ENCODE measurements at regions of chr22 and their contacts with region 1.

Region 1: GRCh38 chr22:34403672-34404071 is 483.4 kb upstream of the LARGE1 start:
- DNase-seq: no peak
- H3K4me3 ChIP-seq: no peak overlapping the region
- H3K27ac ChIP-seq: no peak overlapping the region
- H3K4me1 ChIP-seq: no peaks in the 10 kb centered on the region
- H3K27me3 ChIP-seq: no peaks in the 10 kb centered on the region
- CTCF ChIP-seq: no peak

Region 2: GRCh38 chr22:35014812-35015211 is 611.1 kb after region 1 on chr22:
- CTCF ChIA-PET with region 1: no interaction called
- dilution Hi-C with region 1: no loop called
- in situ Hi-C with region 1: loop called in 1 of 2 experiments (anchors 10 kb)
- intact Hi-C with region 1: no loop called
- DNase-seq: no peak
- H3K4me3 ChIP-seq: no peak overlapping the region
- H3K27ac ChIP-seq: no peak overlapping the region
- H3K4me1 ChIP-seq: no peaks in the 10 kb centered on the region
- H3K27me3 ChIP-seq: no peaks in the 10 kb centered on the region
- CTCF ChIP-seq: no peak

Region 3: GRCh38 chr22:35140879-35141745 is 737.4 kb after region 1 on chr22:
- CTCF ChIA-PET with region 1: no interaction called
- dilution Hi-C with region 1: no loop called
- in situ Hi-C with region 1: loop called in 1 of 2 experiments (anchors 10 kb)
- intact Hi-C with region 1: no loop called
- DNase-seq: no peak
- H3K4me3 ChIP-seq: no peak overlapping the region
- H3K27ac ChIP-seq: no peak overlapping the region
- H3K4me1 ChIP-seq: no peaks in the 10 kb centered on the region
- H3K27me3 ChIP-seq: no peaks in the 10 kb centered on the region
- CTCF ChIP-seq: no peak